ENCODE measurements at regions of chr13 and their contacts with region 1.

Region 1: GRCh38 chr13:62119739-62120700 is 704.4 kb upstream of the PCDH20 start:
- DNase-seq: peak; percentile 78

Region 2: DNA sequence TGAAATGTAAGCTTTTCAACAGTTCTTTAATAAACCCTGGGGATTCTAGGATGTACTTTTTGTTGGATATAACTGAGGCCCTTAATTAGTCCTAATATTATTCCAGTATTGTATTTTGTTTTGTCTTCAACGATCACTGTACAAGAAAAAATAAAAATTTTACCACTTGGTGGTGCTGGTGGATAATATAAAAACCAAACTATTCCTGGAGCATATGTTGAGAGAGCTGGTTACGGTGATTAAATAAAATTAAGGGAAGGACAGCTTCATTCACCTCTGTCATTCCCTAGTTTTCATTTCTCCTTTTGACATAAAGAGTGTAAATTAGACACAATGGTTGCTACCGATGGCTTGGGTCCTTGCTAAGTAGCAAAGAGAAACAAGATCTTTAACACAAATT is 105.7 kb before region 1 on chr13:
- CTCF ChIA-PET with region 1: interaction called, 13 read pairs
- POLR2A ChIA-PET with region 1: interaction called, 5 read pairs
- DNase-seq: peak; percentile 77

Region 3: GRCh38 chr13:62130062-62130970 is 10.3 kb after region 1 on chr13:
- CTCF ChIA-PET with region 1: interaction called, 16 read pairs
- POLR2A ChIA-PET with region 1: interaction called, 7 read pairs
- DNase-seq: no peak

Region 4: DNA sequence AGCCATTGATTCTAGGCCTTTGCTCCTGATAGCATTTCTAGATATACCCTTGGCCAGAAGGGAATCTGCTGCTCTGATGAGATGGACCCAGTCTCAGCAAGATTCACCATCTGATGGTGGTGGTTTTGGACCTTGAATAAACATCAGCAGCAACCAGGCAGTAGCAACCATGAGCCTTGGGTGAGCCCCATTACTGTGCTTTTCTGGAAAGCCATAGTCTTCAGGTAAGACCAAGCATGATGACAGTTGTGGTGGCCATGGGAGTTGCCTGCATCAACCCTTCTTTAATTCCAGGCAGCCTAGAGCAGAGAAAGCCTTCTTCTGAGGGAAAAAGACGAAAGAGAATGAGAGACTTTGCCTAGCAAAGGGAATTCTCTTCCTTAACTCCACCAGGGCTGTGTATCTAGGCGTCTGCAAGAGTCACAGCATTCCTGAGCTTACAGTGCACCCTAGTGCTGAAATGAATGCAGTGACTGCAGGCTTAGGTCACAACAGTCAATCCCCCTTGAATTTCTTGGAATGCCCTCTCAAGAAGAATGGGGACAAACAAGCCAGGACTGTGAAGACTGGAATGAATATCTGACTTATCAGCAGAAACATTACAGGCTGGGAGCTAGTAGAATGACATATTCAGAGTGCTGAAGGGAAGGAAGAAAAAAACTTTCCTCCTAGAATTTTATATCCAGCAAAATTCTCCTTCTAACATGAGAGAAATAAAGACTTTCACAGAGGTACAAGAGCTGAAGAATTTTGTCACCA is 238.0 kb after region 1 on chr13:
- CTCF ChIA-PET with region 1: interaction called, 30 read pairs
- POLR2A ChIA-PET with region 1: interaction called, 3 read pairs
- DNase-seq: peak; percentile 90

Measured in HEK293T (cell line).